K562 (cell line): ENCODE measurements at regions of chr10 and their contacts with region 1.

Region 1: DNA sequence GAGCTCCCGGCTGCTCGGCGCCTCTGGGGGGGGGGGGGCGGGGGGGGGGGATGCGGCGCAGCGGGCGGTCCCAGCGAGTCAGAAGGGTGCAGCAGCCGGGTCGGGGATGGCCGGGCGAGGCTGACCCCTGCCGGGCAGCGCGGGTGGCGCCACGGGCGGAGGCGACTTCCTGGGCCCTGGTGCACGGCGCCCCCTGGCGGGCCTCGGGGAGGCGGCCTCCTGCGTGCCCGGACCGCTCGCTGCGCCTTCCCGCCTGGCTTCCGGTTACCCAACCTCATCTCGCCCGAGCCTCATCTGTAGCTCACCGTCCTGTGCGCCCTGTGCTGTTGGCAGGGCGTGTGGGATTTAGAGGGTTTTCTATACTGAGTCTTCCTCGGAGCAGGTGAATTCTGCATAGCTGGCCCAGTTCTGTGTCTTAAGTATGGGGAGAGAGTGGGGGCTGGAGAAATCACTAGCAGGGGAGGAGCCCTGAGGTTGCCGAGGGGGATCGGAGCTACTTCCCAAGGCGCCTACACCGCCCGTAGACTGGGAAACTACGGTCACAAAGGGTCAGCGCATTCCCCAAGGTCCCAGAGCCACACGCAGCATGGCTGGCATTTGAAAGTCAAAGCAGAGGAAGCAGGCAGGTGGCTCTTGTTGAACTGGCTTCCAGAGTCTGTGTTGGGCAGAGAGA is 28.3 kb upstream of the WDFY4 start:
- DNase-seq: peak; percentile 94 to 99 (median 96)
- ATAC-seq: peak; percentile 97
- H3K4me3 ChIP-seq: peak overlapping the region; percentile 45
- H3K27ac ChIP-seq: no peak overlapping the region
- H3K4me1 ChIP-seq: peaks cover 10 to 24% of the 10 kb centered on the region in 2 experiments; a peak in 4 of 5 replicates
- H3K27me3 ChIP-seq: peaks cover 2 to 39% of the 10 kb centered on the region in 2 experiments; a peak in 3 of 5 replicates
- CTCF ChIP-seq: peak; percentile 97 to 99 (median 99)
- EP300 ChIP-seq: 0 out of 2 replicates have a peak, but pooled peaks have one; percentile 15
- POLR2A ChIP-seq: no peak
- RAD21 ChIP-seq: peak; percentile 97

Region 2: GRCh38 chr10:48363617-48364355 is 292.6 kb before region 1 on chr10:
- CTCF ChIA-PET with region 1: interaction called, 29 read pairs
- POLR2A ChIA-PET with region 1: interaction called, 3 read pairs
- in situ Hi-C with region 1: loop called (anchors 10 kb)
- intact Hi-C with region 1: loop called (anchors 5 kb)
- DNase-seq: peak; percentile 30 to 88 (median 50)
- ATAC-seq: peak; percentile 91
- H3K4me3 ChIP-seq: no peak overlapping the region
- H3K27ac ChIP-seq: peak overlapping the region; percentile 36; the same call in 2 of the 3 replicates
- H3K4me1 ChIP-seq: peaks cover 6 to 37% of the 10 kb centered on the region in 2 experiments
- H3K27me3 ChIP-seq: no peaks in the 10 kb centered on the region
- CTCF ChIP-seq: peak; percentile 82 to 96 (median 83)
- EP300 ChIP-seq: no peak
- POLR2A ChIP-seq: no peak
- RAD21 ChIP-seq: peak; percentile 98 to 100

Region 3: DNA sequence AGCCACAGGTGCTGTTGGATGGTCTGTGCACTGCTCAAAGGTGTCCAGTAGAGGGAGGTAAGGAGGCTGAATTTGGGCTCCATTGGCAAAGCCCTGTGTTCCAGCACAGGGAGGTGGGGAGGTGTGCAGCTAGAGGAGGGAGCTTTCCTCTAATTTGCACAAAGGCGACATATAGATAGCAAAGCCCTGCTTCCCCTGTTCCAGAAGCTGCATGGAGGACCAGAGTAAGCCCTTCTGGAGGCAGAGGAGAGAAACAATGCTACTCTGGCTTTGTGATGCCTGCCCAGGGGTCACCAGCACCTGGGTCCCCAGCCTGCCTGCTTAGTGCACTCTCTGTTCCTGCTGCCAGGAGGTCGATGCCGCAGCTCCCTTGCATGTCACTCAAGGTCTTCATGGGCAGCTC is 48.1 kb before region 1 on chr10:
- CTCF ChIA-PET with region 1: interaction called, 14 read pairs
- POLR2A ChIA-PET with region 1: no interaction called
- in situ Hi-C with region 1: no loop called
- intact Hi-C with region 1: loop called (anchors 5 kb)
- DNase-seq: peak; percentile 73 to 77 (median 75)
- ATAC-seq: peak; percentile 96
- H3K4me3 ChIP-seq: no peak overlapping the region
- H3K27ac ChIP-seq: no peak overlapping the region
- H3K4me1 ChIP-seq: peaks cover 0 to 9% of the 10 kb centered on the region in 2 experiments; a peak in 2 of 5 replicates
- H3K27me3 ChIP-seq: peaks cover 22 to 29% of the 10 kb centered on the region in 2 experiments
- CTCF ChIP-seq: peak; percentile 77 to 92 (median 88)
- EP300 ChIP-seq: no peak
- POLR2A ChIP-seq: no peak
- RAD21 ChIP-seq: peak in 1 of 2 experiments; percentile 53; a peak in 2 of 4 replicates

Region 4: DNA sequence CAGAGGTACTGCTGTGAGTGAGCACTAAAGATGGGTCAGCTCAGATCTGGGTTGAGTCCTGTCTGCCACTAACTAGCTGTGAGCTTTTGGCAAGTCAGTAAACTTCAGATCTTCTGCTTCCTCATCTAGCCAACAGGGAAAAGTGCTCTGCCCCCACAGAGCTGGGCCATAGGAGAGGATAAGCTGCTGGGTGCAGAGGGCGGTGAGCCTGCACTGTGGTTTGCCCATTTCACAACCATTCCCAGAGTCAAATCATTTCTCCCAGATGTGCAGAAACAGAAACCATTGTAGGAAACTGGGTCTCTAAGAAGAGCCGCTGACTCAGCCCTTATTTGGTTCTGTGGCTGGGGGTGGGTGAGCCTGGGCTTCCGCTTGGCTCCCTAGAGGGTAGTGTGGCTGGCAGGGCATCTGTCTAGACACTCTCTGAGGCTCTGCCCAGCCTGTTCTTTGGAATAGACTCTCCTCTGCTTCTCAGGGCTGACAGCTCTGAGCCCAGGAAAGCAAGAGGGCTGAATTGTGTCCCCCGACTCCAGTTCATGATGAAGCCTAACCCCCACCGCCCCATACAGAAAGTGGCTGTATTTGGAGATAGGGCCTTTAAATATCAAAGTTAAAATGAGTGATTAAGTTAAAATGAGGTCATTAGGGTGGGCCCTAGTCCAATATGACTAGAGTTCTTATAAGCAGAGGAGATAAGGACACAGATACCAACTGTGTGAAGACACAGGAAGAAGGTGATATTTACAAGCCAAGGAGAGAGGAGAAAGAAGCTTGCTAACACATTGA is 22.0 kb before region 1 on chr10:
- CTCF ChIA-PET with region 1: no interaction called
- POLR2A ChIA-PET with region 1: no interaction called
- in situ Hi-C with region 1: no loop called
- intact Hi-C with region 1: no loop called
- DNase-seq: no peak
- ATAC-seq: no peak
- H3K4me3 ChIP-seq: no peak overlapping the region
- H3K27ac ChIP-seq: no peak overlapping the region
- H3K4me1 ChIP-seq: no peaks in the 10 kb centered on the region
- H3K27me3 ChIP-seq: peaks cover 0 to 9% of the 10 kb centered on the region in 2 experiments; a peak in 1 of 5 replicates
- CTCF ChIP-seq: no peak
- EP300 ChIP-seq: no peak
- POLR2A ChIP-seq: no peak
- RAD21 ChIP-seq: no peak

Region 5: GRCh38 chr10:48926764-48927540 is 270.6 kb after region 1 on chr10:
- CTCF ChIA-PET with region 1: no interaction called
- POLR2A ChIA-PET with region 1: no interaction called
- in situ Hi-C with region 1: no loop called
- intact Hi-C with region 1: loop called (anchors 10 kb)
- DNase-seq: no peak
- ATAC-seq: no peak
- H3K4me3 ChIP-seq: no peak overlapping the region
- H3K27ac ChIP-seq: no peak overlapping the region
- H3K4me1 ChIP-seq: no peaks in the 10 kb centered on the region; a peak in 1 of 5 replicates
- H3K27me3 ChIP-seq: peaks cover 14 to 38% of the 10 kb centered on the region in 2 experiments; a peak in 4 of 5 replicates
- CTCF ChIP-seq: no peak
- EP300 ChIP-seq: no peak
- POLR2A ChIP-seq: no peak
- RAD21 ChIP-seq: no peak

Region 6: GRCh38 chr10:49518982-49519578 is 862.7 kb after region 1 on chr10:
- CTCF ChIA-PET with region 1: interaction called, 13 read pairs
- POLR2A ChIA-PET with region 1: interaction called, 3 read pairs
- in situ Hi-C with region 1: loop called (anchors 10 kb)
- intact Hi-C with region 1: no loop called
- DNase-seq: peak; percentile 71 to 81 (median 80)
- ATAC-seq: peak; percentile 94
- H3K4me3 ChIP-seq: no peak overlapping the region
- H3K27ac ChIP-seq: no peak overlapping the region
- H3K4me1 ChIP-seq: no peaks in the 10 kb centered on the region
- H3K27me3 ChIP-seq: no peaks in the 10 kb centered on the region
- CTCF ChIP-seq: peak; percentile 74 to 88 (median 78)
- EP300 ChIP-seq: no peak
- POLR2A ChIP-seq: no peak
- RAD21 ChIP-seq: peak; percentile 83 to 88